Right ventricle myocardium inferior (tissue), 1 donor: ENCODE measurements at regions of chr6 and their contacts with region 1.

Region 1: GRCh38 chr6:75493400-75494064 is at the start of gene FILIP1:
- DNase-seq: peak; percentile 66
- ATAC-seq: peak; percentile 91
- total RNA-seq, gene FILIP1: 149 TPM

Region 2: GRCh38 chr6:75284632-75285286 is 208.8 kb before region 1 on chr6 and contains the start of gene TMEM30A:
- intact Hi-C with region 1: loop called (anchors 5 kb)
- DNase-seq: peak; percentile 98
- ATAC-seq: peak; percentile 100
- total RNA-seq, gene TMEM30A: 45.2 TPM

Region 3: GRCh38 chr6:75368151-75368779 is 125.3 kb before region 1 on chr6:
- intact Hi-C with region 1: loop called (anchors 1 kb)
- DNase-seq: no peak
- ATAC-seq: peak; percentile 66

Region 4: DNA sequence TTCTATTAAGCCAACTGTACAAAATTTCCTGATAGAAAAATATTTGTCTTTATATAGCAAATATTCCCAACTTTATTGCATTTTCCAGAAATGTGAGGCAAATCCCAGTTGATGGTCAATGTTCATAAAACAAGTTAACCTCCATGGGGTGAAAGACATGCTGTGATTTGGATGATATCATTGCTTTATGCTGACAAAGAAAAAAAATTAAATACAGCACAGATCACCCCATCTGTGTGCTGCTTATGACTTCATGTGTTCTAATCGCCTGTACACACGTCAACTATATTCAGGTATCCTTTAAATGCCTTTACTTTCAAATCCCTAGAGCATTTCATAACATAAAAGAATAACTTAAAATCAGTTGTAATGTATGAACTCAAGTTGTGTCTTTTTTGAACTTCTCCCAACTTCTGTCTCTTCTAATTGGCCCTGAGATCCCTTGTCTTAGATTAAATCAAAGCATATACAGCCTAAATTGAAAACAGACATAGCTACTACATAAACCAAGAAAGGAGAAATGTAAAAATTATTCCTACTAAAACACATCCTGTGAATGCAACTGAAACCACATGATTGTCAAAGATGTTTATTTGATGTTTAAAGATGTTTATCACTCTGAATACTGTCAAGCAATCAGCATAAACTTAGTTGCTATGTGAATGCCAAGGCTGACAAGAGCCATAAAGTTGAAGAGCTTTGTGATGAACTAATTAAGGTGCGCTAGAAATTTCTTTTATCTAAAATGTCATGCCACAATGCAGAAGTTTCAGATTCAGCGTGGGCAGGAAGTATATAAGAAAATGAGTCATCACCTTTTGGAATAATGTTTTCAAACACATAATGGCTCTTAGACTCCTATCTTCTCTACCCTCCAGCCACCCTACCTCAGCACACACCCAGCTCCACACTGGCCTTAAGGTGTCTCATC is 68.6 kb before region 1 on chr6:
- intact Hi-C with region 1: loop called (anchors 5 kb)
- DNase-seq: no peak
- ATAC-seq: no peak

Region 5: DNA sequence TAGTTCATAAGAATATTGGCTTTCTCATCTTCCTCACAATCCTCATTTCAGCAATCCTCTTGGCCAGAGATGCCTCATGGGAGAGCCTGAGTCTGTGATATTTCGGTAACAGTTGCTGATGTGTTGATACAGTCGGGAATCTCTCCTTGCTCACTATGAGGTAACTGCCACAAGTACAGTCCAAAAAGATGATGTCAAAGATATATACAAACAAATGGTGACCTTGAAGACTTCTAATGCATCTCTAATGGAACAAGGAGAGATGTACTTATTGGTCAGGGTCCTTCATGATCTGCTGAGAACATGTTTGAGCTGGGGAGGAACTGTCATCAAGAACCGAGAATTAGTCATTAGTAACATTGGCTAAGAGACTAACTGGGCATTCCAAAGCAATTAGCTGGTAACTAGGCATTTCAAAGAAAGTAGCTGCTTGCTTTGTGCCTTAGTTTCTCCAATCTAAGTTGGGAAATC is 56.1 kb before region 1 on chr6:
- intact Hi-C with region 1: loop called (anchors 2 kb)
- DNase-seq: no peak
- ATAC-seq: peak; percentile 87

Region 6: GRCh38 chr6:75676377-75676776 is 182.8 kb after region 1 on chr6:
- intact Hi-C with region 1: no loop called
- DNase-seq: no peak
- ATAC-seq: no peak